Calu3 (cell line): ENCODE measurements at regions of chr2 and their contacts with region 1.

Region 1: GRCh38 chr2:75403991-75404428 is 156.7 kb downstream of the EVA1A start:
- DNase-seq: peak; percentile 16
- H3K4me3 Mint-ChIP-seq: no peak overlapping the region
- H3K27ac Mint-ChIP-seq: no peak overlapping the region
- H3K4me1 Mint-ChIP-seq: no peaks in the 10 kb centered on the region
- H3K27me3 Mint-ChIP-seq: peaks cover 54% of the 10 kb centered on the region
- CTCF ChIP-seq: peak; percentile 56

Region 2: DNA sequence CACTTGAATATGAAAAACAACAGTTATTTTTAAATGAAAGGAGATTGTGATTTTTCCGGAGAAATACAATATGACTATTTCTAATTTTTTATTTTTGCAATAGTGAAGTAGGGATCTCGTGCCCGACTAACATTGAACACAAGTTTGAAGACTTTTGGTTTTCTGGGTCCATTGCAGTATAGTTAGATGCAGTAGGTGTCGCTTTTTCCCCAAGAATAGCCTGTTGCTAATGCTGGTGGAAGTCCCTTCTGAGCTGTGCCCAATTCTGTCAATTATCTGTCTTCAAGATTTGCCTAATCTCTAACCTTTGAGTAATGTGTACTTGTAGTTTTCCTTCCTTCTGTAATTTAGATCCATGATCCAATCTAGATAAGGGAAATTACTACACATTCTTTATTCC is 713.4 kb before region 1 on chr2:
- CTCF ChIA-PET with region 1: no interaction called
- intact Hi-C with region 1: loop called (anchors 1 kb)
- DNase-seq: peak; percentile 59
- H3K4me3 Mint-ChIP-seq: no peak overlapping the region
- H3K27ac Mint-ChIP-seq: no peak overlapping the region
- H3K4me1 Mint-ChIP-seq: peaks cover 31% of the 10 kb centered on the region
- H3K27me3 Mint-ChIP-seq: no peaks in the 10 kb centered on the region
- CTCF ChIP-seq: peak; percentile 68

Region 3: GRCh38 chr2:74919827-74920226 is 484.2 kb before region 1 on chr2:
- CTCF ChIA-PET with region 1: no interaction called
- intact Hi-C with region 1: loop called (anchors 5 kb)
- DNase-seq: peak; percentile 83
- H3K4me3 Mint-ChIP-seq: peak overlapping the region; percentile 12
- H3K27ac Mint-ChIP-seq: no peak overlapping the region
- H3K4me1 Mint-ChIP-seq: peaks cover 11% of the 10 kb centered on the region
- H3K27me3 Mint-ChIP-seq: peaks cover 11% of the 10 kb centered on the region
- CTCF ChIP-seq: peak; percentile 95

Region 4: DNA sequence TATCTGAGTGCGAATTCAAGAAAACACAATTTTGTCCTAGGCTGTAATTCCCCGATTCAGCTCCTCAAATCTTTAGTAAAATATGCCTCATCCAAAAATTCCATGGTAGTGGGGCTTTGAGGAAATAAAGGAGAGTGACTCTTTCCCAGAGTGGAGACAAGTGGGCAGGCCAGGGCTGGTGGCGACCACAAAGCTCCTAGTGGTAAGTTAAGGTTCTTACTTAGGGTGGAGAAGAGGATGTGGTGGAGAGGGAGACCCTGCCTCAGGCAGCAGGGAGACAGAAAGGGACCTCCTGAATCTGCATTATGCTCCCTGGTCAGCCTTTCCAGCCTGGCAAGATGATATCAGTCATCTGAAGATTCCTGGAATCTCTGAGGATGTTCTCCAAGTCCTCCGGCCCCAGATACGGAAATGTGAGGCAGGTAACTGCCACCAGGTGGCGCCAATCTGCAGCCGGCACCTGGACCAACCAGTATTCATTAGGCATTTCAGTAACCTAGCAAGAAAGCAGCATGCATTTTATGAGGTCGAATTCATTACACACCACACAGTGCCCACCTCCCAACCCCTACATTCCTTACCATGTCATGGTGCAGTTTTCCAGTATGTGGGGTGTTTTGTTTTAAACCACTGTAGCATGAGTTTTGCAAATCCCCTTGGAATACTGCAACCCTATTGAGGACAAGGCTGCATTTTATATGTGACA is 339.2 kb before region 1 on chr2:
- CTCF ChIA-PET with region 1: no interaction called
- intact Hi-C with region 1: loop called (anchors 2 kb)
- DNase-seq: peak; percentile 75
- H3K4me3 Mint-ChIP-seq: no peak overlapping the region
- H3K27ac Mint-ChIP-seq: no peak overlapping the region
- H3K4me1 Mint-ChIP-seq: no peaks in the 10 kb centered on the region
- H3K27me3 Mint-ChIP-seq: peaks cover 20% of the 10 kb centered on the region
- CTCF ChIP-seq: peak; percentile 76

Region 5: DNA sequence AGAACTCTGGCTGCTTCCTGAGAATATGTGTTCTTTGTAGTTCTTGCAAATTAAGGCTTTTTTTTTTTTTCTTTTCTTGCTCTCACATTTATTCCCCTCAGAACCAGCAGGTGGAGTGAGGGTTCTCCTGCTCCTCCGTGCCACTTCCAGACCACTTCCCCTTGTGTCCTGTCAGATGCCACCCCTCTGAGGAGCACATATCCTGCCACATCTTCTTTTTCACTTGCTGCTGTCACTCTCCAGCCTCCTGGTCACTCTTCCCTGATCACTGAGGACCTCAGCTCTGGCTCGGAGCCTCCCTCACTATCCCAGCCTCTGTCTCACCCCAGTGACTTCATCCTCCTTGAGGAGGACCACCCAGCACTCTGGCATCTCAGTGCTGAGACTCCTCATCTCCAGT is 305.2 kb before region 1 on chr2:
- CTCF ChIA-PET with region 1: no interaction called
- intact Hi-C with region 1: loop called (anchors 1 kb)
- DNase-seq: peak; percentile 20
- H3K4me3 Mint-ChIP-seq: no peak overlapping the region
- H3K27ac Mint-ChIP-seq: no peak overlapping the region
- H3K4me1 Mint-ChIP-seq: peaks cover 12% of the 10 kb centered on the region
- H3K27me3 Mint-ChIP-seq: peaks cover 54% of the 10 kb centered on the region
- CTCF ChIP-seq: peak; percentile 32

Region 6: GRCh38 chr2:75157430-75157829 is 246.6 kb before region 1 on chr2:
- CTCF ChIA-PET with region 1: no interaction called
- intact Hi-C with region 1: loop called (anchors 1 kb)
- DNase-seq: no peak
- H3K4me3 Mint-ChIP-seq: no peak overlapping the region
- H3K27ac Mint-ChIP-seq: no peak overlapping the region
- H3K4me1 Mint-ChIP-seq: peaks cover 6% of the 10 kb centered on the region
- H3K27me3 Mint-ChIP-seq: peaks cover 10% of the 10 kb centered on the region
- CTCF ChIP-seq: no peak

Region 7: GRCh38 chr2:75199428-75200011 is 204.5 kb before region 1 on chr2 and contains the start of gene TACR1:
- CTCF ChIA-PET with region 1: no interaction called
- intact Hi-C with region 1: loop called (anchors 1 kb)
- DNase-seq: peak; percentile 61
- H3K4me3 Mint-ChIP-seq: peak within 1 kb of the TSS; percentile 70
- H3K27ac Mint-ChIP-seq: no peak within 1 kb of the TSS
- H3K4me1 Mint-ChIP-seq: peaks cover 8% of the 10 kb centered on the region
- H3K27me3 Mint-ChIP-seq: peaks cover 88% of the 10 kb centered on the region
- CTCF ChIP-seq: peak; percentile 39
- total RNA-seq, gene TACR1: not detected in 2 replicates